ENCODE measurements at regions of chr17 and their contacts with region 1.

Region 1: DNA sequence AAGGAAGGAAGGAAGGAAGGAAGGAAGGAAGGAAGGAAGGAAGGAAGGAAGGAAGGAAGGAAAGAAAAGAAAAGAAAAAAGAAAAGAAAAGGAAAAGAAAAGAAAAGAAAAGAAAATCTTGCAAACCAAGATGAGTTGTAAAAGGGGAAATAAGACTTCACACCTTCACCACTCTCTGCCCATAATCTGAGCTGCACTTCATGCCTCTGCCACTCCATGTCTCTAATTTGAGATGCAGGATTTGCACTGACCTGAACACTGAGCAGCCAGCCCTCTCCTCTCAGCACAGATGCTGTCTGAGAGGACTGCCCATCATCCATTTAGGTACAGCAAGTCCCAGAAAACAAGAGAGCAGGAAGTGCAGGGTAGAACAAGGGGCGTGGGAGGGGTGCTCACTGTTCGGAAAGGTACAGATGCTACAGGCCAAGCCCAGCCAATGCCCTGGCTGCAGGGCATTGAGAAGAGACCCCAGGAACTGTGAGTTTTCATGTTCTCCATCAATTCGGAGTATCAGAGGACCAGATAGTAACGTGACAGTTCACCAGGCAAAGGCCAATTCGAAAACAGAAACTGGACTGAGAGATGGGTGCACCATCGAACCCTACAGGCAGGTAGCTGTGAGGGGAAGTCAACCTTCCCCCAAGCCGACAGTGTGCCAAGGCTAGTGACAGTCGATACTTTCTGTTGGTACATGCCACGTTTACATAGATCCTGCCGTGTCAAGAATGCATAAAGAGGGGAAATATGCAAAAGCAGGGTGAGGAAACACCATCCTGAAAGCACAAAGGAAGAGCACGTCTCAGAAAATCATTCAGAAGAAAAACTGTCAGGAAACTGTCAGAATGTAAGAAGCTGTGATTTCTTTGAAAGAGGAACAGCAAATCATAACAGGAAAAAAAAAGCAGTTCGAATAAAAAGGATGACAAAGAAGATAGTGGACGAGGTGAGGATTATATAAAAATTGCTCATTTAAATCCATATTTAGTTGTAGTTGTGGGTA is 142.0 kb upstream of the RCVRN start:
- DNase-seq: no peak
- H3K4me3 ChIP-seq: no peak overlapping the region
- H3K27ac ChIP-seq: peak overlapping the region in 3 of 4 donors; percentile 20 to 48 (median 42)
- H3K4me1 ChIP-seq: peaks cover 4 to 50% (median 31%) of the 10 kb centered on the region in 4 donors
- H3K27me3 ChIP-seq: no peaks in the 10 kb centered on the region
- CTCF ChIP-seq: no peak
- EP300 ChIP-seq: no peak
- POLR2A ChIP-seq: no peak

Region 2: DNA sequence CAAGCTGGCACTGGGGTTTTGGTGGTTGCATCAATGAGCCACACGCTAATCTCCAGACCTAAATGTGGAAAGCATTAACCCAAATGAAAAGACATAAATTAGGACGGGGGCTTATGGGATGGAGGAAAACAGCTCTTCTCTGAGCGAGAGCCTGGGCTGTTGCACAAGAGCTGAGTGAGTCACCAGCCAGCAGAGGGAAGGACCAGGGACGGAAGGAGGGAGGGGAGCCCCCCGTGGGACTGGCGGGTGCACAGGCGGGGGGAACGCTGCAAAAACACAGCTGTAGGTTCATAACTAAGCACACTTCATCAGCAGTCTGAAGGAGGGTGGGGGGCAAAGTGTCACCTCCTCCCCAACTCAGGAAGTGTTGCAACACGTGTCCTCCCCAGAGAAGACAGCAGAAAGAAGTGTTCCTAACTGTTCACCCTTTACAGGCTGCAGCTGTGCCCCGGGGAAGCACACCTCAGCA is 68.0 kb after region 1 on chr17:
- intact Hi-C with region 1: loop called (anchors 10 kb)
- DNase-seq: peak; percentile 98
- H3K4me3 ChIP-seq: peak overlapping the region; percentile 18 to 43 (median 31)
- H3K27ac ChIP-seq: peak overlapping the region; percentile 82 to 88 (median 83)
- H3K4me1 ChIP-seq: peaks cover 55 to 80% (median 69%) of the 10 kb centered on the region in 4 donors
- H3K27me3 ChIP-seq: no peaks in the 10 kb centered on the region
- CTCF ChIP-seq: no peak
- EP300 ChIP-seq: no peak
- POLR2A ChIP-seq: no peak